Naive thymus-derived CD4-positive, alpha-beta T cell (primary cell): ENCODE measurements at regions of chr12 and their contacts with region 1.

Region 1: GRCh38 chr12:39380090-39380489 is 62.8 kb downstream of the KIF21A start:
- DNase-seq: no peak
- ATAC-seq: no peak
- H3K4me3 ChIP-seq: no peak overlapping the region
- H3K4me3 Mint-ChIP-seq: no peak overlapping the region
- H3K27ac ChIP-seq: no peak overlapping the region
- H3K27ac Mint-ChIP-seq: no peak overlapping the region
- H3K4me1 ChIP-seq: no peaks in the 10 kb centered on the region
- H3K4me1 Mint-ChIP-seq: no peaks in the 10 kb centered on the region
- H3K27me3 ChIP-seq: no peaks in the 10 kb centered on the region
- H3K27me3 Mint-ChIP-seq: no peaks in the 10 kb centered on the region

Region 2: GRCh38 chr12:39420043-39420442 is 40.0 kb after region 1 on chr12:
- CTCF ChIA-PET with region 1: no interaction called
- POLR2A ChIA-PET with region 1: no interaction called
- intact Hi-C with region 1: loop called in 1 of 2 experiments (anchors 5 kb)
- DNase-seq: no peak
- ATAC-seq: no peak
- H3K4me3 ChIP-seq: no peak overlapping the region
- H3K4me3 Mint-ChIP-seq: no peak overlapping the region
- H3K27ac ChIP-seq: no peak overlapping the region
- H3K27ac Mint-ChIP-seq: peak overlapping the region in 1 of 9 donors; percentile 17
- H3K4me1 ChIP-seq: no peaks in the 10 kb centered on the region
- H3K4me1 Mint-ChIP-seq: peaks cover 0 to 4% (median 0%) of the 10 kb centered on the region in 7 donors
- H3K27me3 ChIP-seq: no peaks in the 10 kb centered on the region
- H3K27me3 Mint-ChIP-seq: no peaks in the 10 kb centered on the region